AG04449 (cell line): ENCODE measurements at regions of chr9 and their contacts with region 1.

Region 1: GRCh38 chr9:129626079-129626624 is at the start of gene NTMT1:
- DNase-seq: no peak
- H3K4me3 ChIP-seq: peak within 1 kb of the TSS; percentile 66
- CTCF ChIP-seq: no peak

Region 2: GRCh38 chr9:129145822-129146292 is 480.3 kb before region 1 on chr9:
- CTCF ChIA-PET with region 1: interaction called, 735 read pairs
- POLR2A ChIA-PET with region 1: interaction called, 15 read pairs
- DNase-seq: peak; percentile 56
- H3K4me3 ChIP-seq: no peak overlapping the region
- CTCF ChIP-seq: no peak

Region 3: GRCh38 chr9:129610473-129611301 is 15.5 kb before region 1 on chr9:
- CTCF ChIA-PET with region 1: interaction called, 114 read pairs
- POLR2A ChIA-PET with region 1: no interaction called
- DNase-seq: no peak
- H3K4me3 ChIP-seq: peak overlapping the region; percentile 66
- CTCF ChIP-seq: peak; percentile 86

Region 4: DNA sequence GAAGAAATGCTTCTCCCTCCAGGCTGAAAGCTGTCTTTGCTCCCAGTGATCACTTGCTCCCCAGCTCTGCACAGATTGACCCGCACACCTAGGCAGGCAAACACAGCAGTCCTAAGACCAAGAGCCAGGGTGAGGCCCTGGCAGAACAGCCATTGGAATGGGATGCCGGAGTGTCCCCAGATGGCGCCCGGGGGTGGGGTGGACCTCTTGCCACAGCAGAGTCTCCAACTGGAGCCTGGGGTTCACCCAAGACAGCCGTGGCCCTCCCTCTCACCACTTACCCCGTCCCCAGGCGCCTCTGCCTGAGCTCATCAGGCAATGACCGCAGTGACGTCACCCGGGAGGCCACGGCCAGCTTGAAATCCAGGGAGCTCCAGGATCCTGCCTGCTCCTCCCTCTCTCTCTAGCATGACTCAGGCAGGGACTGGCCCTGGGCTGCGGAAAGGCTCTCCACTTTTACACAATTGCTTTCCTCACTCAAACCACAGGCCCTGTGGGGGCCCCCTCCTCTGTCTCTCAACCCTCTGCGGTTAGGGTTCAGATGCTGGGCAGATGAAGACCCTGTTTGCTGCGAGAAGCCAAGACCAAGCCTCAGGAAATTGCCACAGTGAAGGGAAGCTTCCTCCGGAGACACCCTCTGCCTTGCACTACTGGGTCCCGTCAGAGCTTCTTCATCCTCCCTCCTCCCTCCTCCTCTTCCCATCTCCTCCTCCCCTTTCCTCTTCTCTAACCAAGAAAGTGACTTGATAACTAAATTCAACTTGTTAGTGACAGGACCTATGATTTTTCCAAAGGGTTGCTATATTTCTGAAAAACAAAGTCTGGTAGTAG is 151.0 kb after region 1 on chr9:
- CTCF ChIA-PET with region 1: interaction called, 11 read pairs
- POLR2A ChIA-PET with region 1: no interaction called
- DNase-seq: peak; percentile 98
- H3K4me3 ChIP-seq: peak overlapping the region; percentile 36
- CTCF ChIP-seq: no peak